AG04450 (cell line): ENCODE measurements at regions of chr22 and their contacts with region 1.

Region 1: GRCh38 chr22:36065775-36066559 is 37.3 kb upstream of the RBFOX2 start:
- DNase-seq: peak; percentile 87
- H3K4me3 ChIP-seq: peak overlapping the region; percentile 65
- H3K27ac ChIP-seq: peak overlapping the region; percentile 78
- H3K27me3 ChIP-seq: no peaks in the 10 kb centered on the region
- CTCF ChIP-seq: peak; percentile 96

Region 2: GRCh38 chr22:35840302-35840739 is 225.6 kb before region 1 on chr22:
- CTCF ChIA-PET with region 1: interaction called, 20 read pairs
- POLR2A ChIA-PET with region 1: interaction called, 6 read pairs
- DNase-seq: peak; percentile 96
- H3K4me3 ChIP-seq: peak overlapping the region; percentile 73
- H3K27ac ChIP-seq: peak overlapping the region; percentile 48
- H3K27me3 ChIP-seq: no peaks in the 10 kb centered on the region
- CTCF ChIP-seq: no peak

Region 3: GRCh38 chr22:35921777-35922176 is 144.2 kb before region 1 on chr22:
- CTCF ChIA-PET with region 1: interaction called, 82 read pairs
- POLR2A ChIA-PET with region 1: no interaction called
- DNase-seq: peak; percentile 48
- H3K4me3 ChIP-seq: no peak overlapping the region
- H3K27ac ChIP-seq: no peak overlapping the region
- H3K27me3 ChIP-seq: no peaks in the 10 kb centered on the region
- CTCF ChIP-seq: peak; percentile 47

Region 4: DNA sequence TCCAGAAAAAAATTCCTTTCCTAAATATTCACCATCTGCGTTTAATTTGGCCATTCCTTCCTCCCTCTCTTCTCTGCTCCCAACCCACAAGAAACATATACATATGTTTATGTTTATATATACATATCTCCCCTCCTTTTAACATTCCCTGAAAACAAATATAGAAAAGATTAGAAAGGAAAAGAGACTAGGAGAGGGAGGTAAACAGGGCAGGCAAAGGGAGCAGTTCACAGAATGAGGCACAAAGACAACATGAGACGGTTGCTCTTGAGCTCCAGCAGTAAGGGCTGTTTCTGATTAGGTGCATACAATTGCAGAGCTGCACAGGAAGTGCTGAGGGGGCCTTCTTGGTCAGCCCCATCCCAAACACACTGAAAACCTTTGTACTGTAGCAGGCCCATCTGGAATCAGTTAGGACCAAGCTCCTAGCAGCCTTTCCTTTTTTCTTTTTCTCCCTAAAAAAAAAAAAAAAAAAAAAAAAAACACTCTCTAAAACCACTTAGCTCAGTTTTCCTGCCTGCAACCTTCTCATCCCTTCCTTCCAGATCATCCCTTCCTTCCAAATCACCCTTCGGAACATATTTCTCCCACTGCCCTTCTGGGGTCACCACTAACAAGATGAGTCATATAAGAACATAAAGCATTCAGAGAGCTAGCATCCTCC is 94.4 kb before region 1 on chr22:
- CTCF ChIA-PET with region 1: interaction called, 14 read pairs
- POLR2A ChIA-PET with region 1: interaction called, 8 read pairs
- DNase-seq: peak; percentile 80
- H3K4me3 ChIP-seq: peak overlapping the region; percentile 7; the same call in 1 of the 2 replicates
- H3K27ac ChIP-seq: peak overlapping the region; percentile 80
- H3K27me3 ChIP-seq: no peaks in the 10 kb centered on the region
- CTCF ChIP-seq: no peak

Region 5: DNA sequence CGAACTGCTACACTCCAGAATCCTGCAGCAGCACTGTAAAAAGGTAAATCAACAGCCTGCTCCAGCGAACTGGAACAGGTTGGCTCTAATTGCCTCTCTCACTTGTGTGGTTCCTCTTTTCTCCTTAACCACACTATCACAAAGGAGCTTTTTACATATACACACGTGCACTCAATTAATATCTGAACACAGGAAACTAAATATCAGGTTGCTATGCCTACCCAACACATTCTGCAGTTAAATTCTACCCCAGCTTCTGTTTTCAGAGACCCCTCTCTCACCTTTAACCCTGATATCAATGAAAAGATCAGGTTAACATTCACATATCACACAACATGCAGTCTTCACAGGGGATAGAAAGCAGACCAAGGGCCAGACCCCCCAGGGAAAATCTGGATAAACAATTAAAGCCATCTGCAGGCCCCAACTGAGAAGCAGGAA is 48.3 kb before region 1 on chr22:
- CTCF ChIA-PET with region 1: interaction called, 24 read pairs
- POLR2A ChIA-PET with region 1: interaction called, 3 read pairs
- DNase-seq: no peak
- H3K4me3 ChIP-seq: no peak overlapping the region
- H3K27ac ChIP-seq: no peak overlapping the region
- H3K27me3 ChIP-seq: no peaks in the 10 kb centered on the region
- CTCF ChIP-seq: no peak

Region 6: GRCh38 chr22:36110306-36110881 is 44.4 kb after region 1 on chr22:
- CTCF ChIA-PET with region 1: interaction called, 13 read pairs
- POLR2A ChIA-PET with region 1: no interaction called
- DNase-seq: no peak
- H3K4me3 ChIP-seq: no peak overlapping the region
- H3K27ac ChIP-seq: no peak overlapping the region
- H3K27me3 ChIP-seq: no peaks in the 10 kb centered on the region
- CTCF ChIP-seq: no peak

Region 7: DNA sequence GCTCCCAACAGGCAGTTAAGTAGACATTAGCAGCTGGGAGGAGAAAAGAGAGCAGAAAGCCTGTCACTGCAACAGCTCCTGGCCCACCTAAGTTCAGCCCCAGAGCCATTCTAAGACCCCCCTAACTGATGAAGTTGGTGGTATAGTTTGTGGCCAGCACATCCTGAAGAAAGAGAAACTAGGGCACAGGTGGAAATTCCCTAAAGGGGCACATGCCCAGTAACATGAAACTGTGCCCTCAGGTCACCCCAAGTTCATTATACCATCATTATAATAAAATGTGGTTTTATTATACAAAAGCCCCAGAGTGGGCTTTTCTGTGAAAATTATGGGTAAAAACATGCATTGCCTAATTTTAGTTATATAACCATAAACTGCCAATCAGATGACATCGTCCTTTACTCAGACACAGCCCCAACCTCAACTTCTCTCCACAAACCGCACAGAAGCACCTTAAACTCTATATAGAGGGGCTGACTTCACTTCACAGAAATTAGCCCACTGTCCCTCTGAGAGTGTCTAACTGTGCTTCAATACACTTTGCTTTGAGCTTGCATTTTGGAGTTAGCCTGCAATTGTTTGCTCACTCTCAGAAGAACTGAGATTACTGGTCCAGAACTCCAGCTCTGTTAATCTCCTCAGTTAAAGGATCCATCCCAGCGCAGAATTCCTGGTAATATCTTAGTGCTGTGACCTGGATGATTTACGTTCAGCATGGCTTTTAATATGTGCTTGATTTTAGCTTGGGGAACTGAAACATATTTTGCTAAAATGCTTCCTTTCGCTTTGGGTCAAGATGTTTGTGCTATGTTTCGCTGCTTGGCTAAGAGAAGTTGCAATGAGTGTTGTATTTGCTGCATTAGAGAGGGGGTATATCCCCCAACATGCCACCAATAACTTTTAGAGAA is 96.4 kb after region 1 on chr22:
- CTCF ChIA-PET with region 1: no interaction called
- POLR2A ChIA-PET with region 1: no interaction called
- DNase-seq: no peak
- H3K4me3 ChIP-seq: no peak overlapping the region
- H3K27ac ChIP-seq: no peak overlapping the region
- H3K27me3 ChIP-seq: peaks cover 30% of the 10 kb centered on the region
- CTCF ChIP-seq: no peak